MCF 10A (cell line): ENCODE measurements at regions of chr2 and their contacts with region 1.

Region 1: GRCh38 chr2:112626604-112627059 is 19.1 kb upstream of the SLC20A1 start:
- DNase-seq: peak; percentile 73
- H3K4me3 Mint-ChIP-seq: peak overlapping the region; percentile 58
- H3K27ac Mint-ChIP-seq: peak overlapping the region; percentile 93
- H3K4me1 Mint-ChIP-seq: peaks cover 58% of the 10 kb centered on the region
- H3K27me3 Mint-ChIP-seq: no peaks in the 10 kb centered on the region
- CTCF ChIP-seq: peak; percentile 85

Region 2: GRCh38 chr2:112606488-112606902 is 20.1 kb before region 1 on chr2:
- CTCF ChIA-PET with region 1: interaction called, 45 read pairs
- POLR2A ChIA-PET with region 1: interaction called, 9 read pairs
- intact Hi-C with region 1: no loop called
- DNase-seq: no peak
- H3K4me3 Mint-ChIP-seq: no peak overlapping the region
- H3K27ac Mint-ChIP-seq: no peak overlapping the region
- H3K4me1 Mint-ChIP-seq: peaks cover 4% of the 10 kb centered on the region
- H3K27me3 Mint-ChIP-seq: no peaks in the 10 kb centered on the region
- CTCF ChIP-seq: no peak

Region 3: DNA sequence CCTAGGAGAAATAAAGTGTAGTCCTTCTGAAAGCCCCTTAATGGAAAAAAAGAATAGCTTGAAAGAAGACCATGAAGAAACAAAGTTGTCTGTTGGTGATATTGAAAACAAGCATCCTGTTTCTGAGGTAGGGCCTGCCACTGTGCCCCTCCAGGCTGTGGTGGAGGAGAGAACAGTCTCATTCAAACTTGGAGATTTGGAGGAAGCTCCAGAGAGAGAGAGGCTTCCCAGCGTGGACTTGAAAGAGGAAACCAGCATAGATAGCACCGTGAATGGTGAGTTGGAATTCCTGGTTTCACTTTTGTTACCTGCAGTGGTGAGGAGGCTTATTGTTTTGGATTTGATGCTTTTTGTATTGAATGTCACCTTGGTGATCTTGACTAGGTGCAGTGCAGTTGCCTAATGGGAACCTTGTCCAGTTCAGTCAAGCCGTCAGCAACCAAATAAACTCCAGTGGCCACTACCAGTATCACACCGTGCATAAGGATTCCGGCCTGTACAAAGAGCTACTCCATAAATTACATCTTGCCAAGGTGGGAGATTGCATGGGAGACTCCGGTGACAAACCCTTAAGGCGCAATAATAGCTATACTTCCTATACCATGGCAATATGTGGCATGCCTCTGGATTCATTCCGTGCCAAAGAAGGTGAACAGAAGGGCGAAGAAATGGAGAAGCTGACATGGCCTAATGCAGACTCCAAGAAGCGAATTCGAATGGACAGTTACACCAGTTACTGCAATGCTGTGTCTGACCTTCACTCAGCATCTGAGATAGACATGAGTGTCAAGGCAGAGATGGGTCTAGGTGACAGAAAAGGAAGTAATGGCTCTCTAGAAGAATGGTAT is 32.4 kb after region 1 on chr2:
- CTCF ChIA-PET with region 1: interaction called, 6 read pairs
- POLR2A ChIA-PET with region 1: interaction called, 78 read pairs
- intact Hi-C with region 1: no loop called
- DNase-seq: peak; percentile 49
- H3K4me3 Mint-ChIP-seq: no peak overlapping the region
- H3K27ac Mint-ChIP-seq: peak overlapping the region; percentile 37
- H3K4me1 Mint-ChIP-seq: peaks cover 11% of the 10 kb centered on the region
- H3K27me3 Mint-ChIP-seq: no peaks in the 10 kb centered on the region
- CTCF ChIP-seq: no peak

Region 4: DNA sequence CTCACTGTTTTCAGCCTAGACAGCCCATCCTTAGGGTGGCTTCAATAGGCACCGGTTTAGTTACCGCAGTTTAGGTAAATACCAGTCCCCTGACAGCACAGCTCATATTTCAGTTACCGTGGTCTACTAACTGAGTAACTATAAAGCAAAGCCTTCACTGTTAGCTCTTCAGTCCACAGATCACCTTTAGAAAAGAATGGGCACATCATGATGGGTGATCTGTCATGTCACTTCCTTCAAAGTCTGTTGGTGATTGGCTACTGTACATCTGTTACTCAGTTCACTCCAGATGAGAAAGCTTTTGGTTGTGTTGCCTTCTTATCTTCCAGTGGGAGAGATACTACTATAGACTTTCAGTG is 40.1 kb after region 1 on chr2:
- CTCF ChIA-PET with region 1: interaction called, 11 read pairs
- POLR2A ChIA-PET with region 1: interaction called, 78 read pairs
- intact Hi-C with region 1: no loop called
- DNase-seq: no peak
- H3K4me3 Mint-ChIP-seq: no peak overlapping the region
- H3K27ac Mint-ChIP-seq: no peak overlapping the region
- H3K4me1 Mint-ChIP-seq: no peaks in the 10 kb centered on the region
- H3K27me3 Mint-ChIP-seq: no peaks in the 10 kb centered on the region
- CTCF ChIP-seq: no peak

Region 5: DNA sequence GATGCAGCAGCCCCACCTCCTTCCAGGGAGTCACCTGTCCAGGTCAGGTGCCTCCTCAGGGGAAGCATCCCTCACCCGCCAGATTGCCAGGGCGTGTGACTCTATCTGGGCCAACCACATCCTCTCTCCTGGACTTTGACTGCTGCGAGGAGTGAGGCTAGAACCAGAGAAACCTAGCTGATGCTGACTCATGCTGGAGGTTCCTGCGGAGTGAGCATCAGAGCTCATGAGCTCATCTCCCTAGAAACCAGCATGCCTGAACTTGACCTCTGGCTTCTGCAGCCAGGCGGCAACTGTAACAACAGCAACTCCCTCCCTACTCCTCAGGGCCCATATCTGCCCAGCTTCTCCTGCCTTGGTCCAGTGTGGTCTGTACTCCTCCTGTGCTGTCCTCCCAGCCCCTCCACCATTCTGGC is 65.9 kb after region 1 on chr2:
- CTCF ChIA-PET with region 1: interaction called, 26 read pairs
- POLR2A ChIA-PET with region 1: interaction called, 50 read pairs
- intact Hi-C with region 1: loop called (anchors 2 kb)
- DNase-seq: peak; percentile 98
- H3K4me3 Mint-ChIP-seq: peak overlapping the region; percentile 7
- H3K27ac Mint-ChIP-seq: peak overlapping the region; percentile 86
- H3K4me1 Mint-ChIP-seq: peaks cover 22% of the 10 kb centered on the region
- H3K27me3 Mint-ChIP-seq: no peaks in the 10 kb centered on the region
- CTCF ChIP-seq: no peak

Region 6: DNA sequence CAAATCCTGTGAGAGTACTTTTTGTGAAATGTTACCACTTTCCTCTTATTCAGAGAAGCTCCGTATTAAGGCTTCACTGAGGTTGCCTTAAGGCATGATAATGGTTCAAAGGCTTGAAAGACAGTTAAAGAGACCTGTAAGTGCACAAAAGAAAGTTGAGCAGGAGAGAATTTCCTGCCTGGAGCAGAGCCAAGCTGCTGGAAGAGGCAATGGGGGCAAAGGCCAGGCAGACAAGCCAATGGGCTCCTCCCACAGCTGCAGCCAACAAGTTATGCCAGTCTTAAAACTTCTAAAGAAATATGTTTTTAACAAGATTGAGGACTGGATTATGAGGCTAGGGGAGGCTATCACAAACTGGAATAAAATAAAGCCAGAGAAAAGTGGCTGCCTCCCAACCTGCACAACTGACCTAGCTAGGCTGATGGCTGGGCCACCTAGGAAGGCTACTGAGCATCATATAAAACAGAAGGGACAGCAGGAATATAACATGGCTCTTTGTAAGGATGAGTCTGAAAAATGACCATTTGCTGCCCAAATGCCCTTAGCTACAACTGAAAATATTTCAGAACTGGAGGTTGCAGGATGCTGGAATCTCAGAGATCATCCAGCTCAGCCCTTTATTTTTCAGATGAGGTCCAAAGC is 207.9 kb after region 1 on chr2:
- CTCF ChIA-PET with region 1: no interaction called
- POLR2A ChIA-PET with region 1: no interaction called
- intact Hi-C with region 1: no loop called
- DNase-seq: no peak
- H3K4me3 Mint-ChIP-seq: no peak overlapping the region
- H3K27ac Mint-ChIP-seq: peak overlapping the region; percentile 69
- H3K4me1 Mint-ChIP-seq: peaks cover 34% of the 10 kb centered on the region
- H3K27me3 Mint-ChIP-seq: no peaks in the 10 kb centered on the region
- CTCF ChIP-seq: no peak

Region 7: DNA sequence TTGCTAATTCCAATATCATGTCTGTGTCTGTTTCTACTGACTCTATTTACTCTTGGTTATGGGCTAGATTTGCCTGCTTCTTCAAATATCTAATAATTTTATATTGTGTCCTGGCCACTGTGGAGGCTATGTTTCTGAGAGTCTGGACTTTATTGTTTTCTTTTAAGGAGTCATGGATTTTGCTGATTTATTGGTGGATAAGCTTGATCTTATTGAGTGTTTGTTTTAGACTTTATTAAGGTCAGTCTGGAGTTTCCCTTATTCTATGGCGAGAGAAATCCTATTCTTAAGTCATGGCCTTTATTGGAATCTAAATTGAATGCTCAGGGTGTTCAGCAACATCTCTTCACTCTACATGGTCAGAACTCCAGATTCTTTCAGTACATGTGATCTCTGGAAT is 755.8 kb after region 1 on chr2:
- CTCF ChIA-PET with region 1: no interaction called
- POLR2A ChIA-PET with region 1: no interaction called
- intact Hi-C with region 1: no loop called
- DNase-seq: no peak
- H3K4me3 Mint-ChIP-seq: no peak overlapping the region
- H3K27ac Mint-ChIP-seq: no peak overlapping the region
- H3K4me1 Mint-ChIP-seq: no peaks in the 10 kb centered on the region
- H3K27me3 Mint-ChIP-seq: no peaks in the 10 kb centered on the region
- CTCF ChIP-seq: no peak